Natural killer cell (primary cell): ENCODE measurements at regions of chr1 and their contacts with region 1.

Region 1: GRCh38 chr1:207499573-207499972 is 3.6 kb downstream of the CR1 start:
- DNase-seq: peak; percentile 41 to 87
- ATAC-seq: peak; percentile 73 to 84 (median 77)
- H3K4me3 ChIP-seq: no peak overlapping the region
- H3K4me3 Mint-ChIP-seq: no peak overlapping the region
- H3K27ac ChIP-seq: no peak overlapping the region
- H3K27ac Mint-ChIP-seq: no peak overlapping the region
- H3K4me1 ChIP-seq: peaks cover 11% of the 10 kb centered on the region
- H3K4me1 Mint-ChIP-seq: peaks cover 0 to 9% of the 10 kb centered on the region in 2 donors
- H3K27me3 ChIP-seq: peaks cover 31% of the 10 kb centered on the region
- H3K27me3 Mint-ChIP-seq: peaks cover 42 to 59% of the 10 kb centered on the region in 2 donors
- CTCF ChIP-seq: peak; percentile 66

Region 2: DNA sequence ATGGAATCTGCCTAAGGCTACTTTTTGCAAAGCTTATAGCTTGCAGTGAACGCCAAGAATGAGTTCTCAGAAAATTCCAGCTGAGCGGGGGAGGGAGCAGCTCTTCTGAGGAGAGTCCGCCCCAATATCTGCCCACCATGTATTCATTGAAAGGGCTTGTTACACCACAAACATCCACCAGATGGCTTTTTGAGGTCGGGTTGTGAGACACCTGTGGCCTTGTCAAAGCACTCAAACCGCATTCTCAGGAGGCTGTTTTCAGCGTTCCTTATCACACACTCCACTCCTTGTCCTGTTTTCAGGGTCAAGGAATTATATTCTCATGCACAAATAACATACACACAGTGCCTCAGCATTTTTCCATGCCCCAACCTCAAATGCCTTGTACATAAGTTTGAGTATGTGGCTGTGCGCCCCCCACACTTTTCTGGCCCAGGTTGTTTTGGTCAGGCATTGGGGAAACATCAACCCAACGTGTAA is 414.8 kb before region 1 on chr1:
- intact Hi-C with region 1: loop called (anchors 1 kb)
- DNase-seq: peak in 1 of 2 donors; percentile 83
- ATAC-seq: peak; percentile 54 to 81 (median 70)
- H3K4me3 ChIP-seq: no peak overlapping the region
- H3K4me3 Mint-ChIP-seq: no peak overlapping the region
- H3K27ac ChIP-seq: no peak overlapping the region
- H3K27ac Mint-ChIP-seq: no peak overlapping the region
- H3K4me1 ChIP-seq: no peaks in the 10 kb centered on the region
- H3K4me1 Mint-ChIP-seq: peaks cover 7 to 13% of the 10 kb centered on the region in 2 donors
- H3K27me3 ChIP-seq: peaks cover 7% of the 10 kb centered on the region
- H3K27me3 Mint-ChIP-seq: peaks cover 18 to 42% of the 10 kb centered on the region in 2 donors
- CTCF ChIP-seq: peak; percentile 62

Region 3: DNA sequence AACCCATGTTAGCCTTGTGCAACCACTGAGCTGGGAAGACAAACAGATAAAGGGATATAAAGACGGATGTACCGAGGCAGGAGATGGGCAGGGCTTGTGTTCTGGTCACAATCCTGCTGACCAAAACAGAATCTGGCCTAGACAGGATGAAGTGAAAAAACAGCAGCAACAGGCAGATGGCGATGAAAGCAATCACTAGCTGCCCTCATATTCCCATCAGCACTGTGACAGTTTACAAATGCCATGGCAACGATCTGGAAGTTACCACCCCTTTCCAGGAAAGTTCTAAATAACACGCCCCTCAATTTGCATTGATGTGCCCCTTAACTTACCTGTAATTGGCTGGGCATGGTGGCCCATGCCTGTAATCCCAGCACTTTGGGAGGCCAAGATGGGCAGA is 211.7 kb after region 1 on chr1:
- intact Hi-C with region 1: no loop called
- DNase-seq: peak in 1 of 2 donors; percentile 8
- ATAC-seq: no peak
- H3K4me3 ChIP-seq: no peak overlapping the region
- H3K4me3 Mint-ChIP-seq: no peak overlapping the region
- H3K27ac ChIP-seq: no peak overlapping the region
- H3K27ac Mint-ChIP-seq: no peak overlapping the region
- H3K4me1 ChIP-seq: no peaks in the 10 kb centered on the region
- H3K4me1 Mint-ChIP-seq: no peaks in the 10 kb centered on the region
- H3K27me3 ChIP-seq: no peaks in the 10 kb centered on the region
- H3K27me3 Mint-ChIP-seq: peaks cover 5% of the 10 kb centered on the region in 2 donors
- CTCF ChIP-seq: no peak